ENCODE measurements at regions of chr10 and their contacts with region 1.

Region 1: DNA sequence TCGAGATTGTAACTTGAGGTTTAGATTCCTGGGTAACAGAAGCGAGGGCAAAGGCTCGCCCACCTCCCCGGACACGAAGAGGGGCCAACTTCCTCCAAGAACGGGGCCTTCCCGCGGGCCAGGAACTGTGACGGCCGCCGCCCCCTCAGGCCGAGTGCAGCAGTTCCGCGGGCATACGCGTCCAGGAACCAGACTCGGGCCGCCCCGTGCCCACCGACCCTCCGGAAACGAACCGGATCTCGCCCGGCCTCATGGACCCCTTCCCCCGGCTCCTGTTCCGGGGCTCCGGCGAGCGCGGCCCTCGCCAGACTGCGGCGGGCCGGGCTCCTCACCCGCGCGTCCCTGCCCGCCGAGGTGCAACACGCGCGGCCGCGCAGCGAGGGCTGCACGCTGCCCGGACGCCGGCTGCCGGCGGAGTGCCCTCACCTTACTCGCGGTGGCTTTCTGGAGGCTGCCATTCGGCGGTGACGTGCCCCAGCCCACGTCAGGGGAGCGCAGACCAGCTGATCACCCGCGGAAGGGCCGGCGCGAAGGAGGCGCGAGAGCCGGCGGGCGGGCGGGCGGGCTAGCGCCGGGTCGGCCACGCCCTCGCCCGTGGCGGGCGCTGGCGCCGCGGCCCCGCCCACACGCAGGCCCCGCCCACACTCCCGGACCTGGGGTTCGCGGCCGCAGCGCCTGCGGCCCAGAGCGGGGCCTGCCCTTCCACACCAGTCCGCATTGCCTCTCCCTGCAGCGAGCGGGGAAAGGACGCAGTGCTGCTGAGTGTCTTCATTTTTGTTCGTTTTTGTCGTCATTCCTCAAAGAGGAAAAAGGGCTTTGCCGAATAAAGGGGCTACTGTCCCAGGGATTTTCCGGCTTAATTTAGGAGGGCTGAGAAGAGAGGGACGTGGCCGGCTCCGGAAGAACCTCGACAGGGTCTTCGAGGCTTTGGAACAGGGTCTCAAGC is at the start of gene XPNPEP1:
- DNase-seq: peak; percentile 79 to 83
- H3K4me3 ChIP-seq: peak within 1 kb of the TSS; percentile 88 to 89 (median 89)
- H3K27ac ChIP-seq: peak within 1 kb of the TSS; percentile 95 to 97
- H3K4me1 ChIP-seq: no peaks in the 10 kb centered on the region
- H3K27me3 ChIP-seq: no peaks in the 10 kb centered on the region
- CTCF ChIP-seq: no peak
- POLR2A ChIP-seq: no peak
- total RNA-seq, gene XPNPEP1: 61.1 to 89.5 (median 89.0) TPM

Region 2: DNA sequence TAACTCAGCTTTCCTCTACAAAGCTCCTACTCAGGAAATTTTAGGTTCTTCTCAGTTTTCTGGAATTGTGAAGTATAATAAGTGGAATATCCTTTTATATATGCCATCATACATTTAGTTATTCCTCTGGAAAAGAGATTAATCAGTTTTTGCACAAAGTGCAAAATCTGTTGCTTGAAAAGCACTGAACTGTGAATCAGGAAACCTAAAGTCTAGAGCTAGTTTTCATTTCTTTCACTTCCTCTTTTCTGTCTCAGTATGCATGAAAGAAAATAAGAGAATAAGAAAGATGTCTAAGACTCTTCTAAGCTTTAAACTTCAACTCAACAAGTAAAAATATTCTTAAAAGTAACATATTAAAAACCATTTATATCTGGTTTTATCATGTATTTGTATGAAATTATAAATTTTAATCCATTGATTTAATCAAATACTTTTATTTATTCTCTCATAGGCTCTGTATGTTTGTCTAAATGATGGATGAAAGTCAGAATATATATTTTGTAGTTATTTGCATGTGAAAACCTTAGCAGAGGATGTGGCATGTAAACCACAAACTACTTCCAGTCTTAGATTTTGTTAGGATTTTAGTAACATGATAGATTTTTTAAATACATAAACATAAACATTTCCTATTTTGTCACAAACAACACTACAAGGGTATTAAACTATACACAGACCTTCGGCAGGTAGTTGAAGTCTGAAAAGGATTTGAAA is 1073.0 kb before region 1 on chr10:
- intact Hi-C with region 1: no loop called
- DNase-seq: no peak
- H3K4me3 ChIP-seq: no peak overlapping the region
- H3K27ac ChIP-seq: no peak overlapping the region
- H3K4me1 ChIP-seq: no peaks in the 10 kb centered on the region
- H3K27me3 ChIP-seq: no peaks in the 10 kb centered on the region
- CTCF ChIP-seq: no peak
- POLR2A ChIP-seq: no peak

Region 3: GRCh38 chr10:109880886-109881768 is 42.1 kb before region 1 on chr10:
- intact Hi-C with region 1: loop called (anchors 1 kb)
- DNase-seq: no peak
- H3K4me3 ChIP-seq: no peak overlapping the region
- H3K27ac ChIP-seq: peak overlapping the region in 1 of 2 donors; percentile 3
- H3K4me1 ChIP-seq: no peaks in the 10 kb centered on the region
- H3K27me3 ChIP-seq: no peaks in the 10 kb centered on the region
- CTCF ChIP-seq: no peak
- POLR2A ChIP-seq: no peak